Activated CD4-positive, alpha-beta memory T cell treated with anti-CD3 and anti-CD28 coated beads for 36 hours (primary cell): ENCODE measurements at regions of chr11 and their contacts with region 1.

Region 1: GRCh38 chr11:31369348-31370329 is at the starts of genes DCDC1 and DNAJC24:
- DNase-seq: peak; percentile 95
- H3K4me3 Mint-ChIP-seq: peak within 1 kb of the TSS; percentile 85
- H3K27ac Mint-ChIP-seq: peak within 1 kb of the TSS; percentile 83
- H3K4me1 Mint-ChIP-seq: peaks cover 55% of the 10 kb centered on the region
- H3K27me3 Mint-ChIP-seq: no peaks in the 10 kb centered on the region
- total RNA-seq, gene DCDC1: 0.21 to 0.27 TPM
- total RNA-seq, gene DNAJC24: 15.4 to 16.8 TPM

Region 2: DNA sequence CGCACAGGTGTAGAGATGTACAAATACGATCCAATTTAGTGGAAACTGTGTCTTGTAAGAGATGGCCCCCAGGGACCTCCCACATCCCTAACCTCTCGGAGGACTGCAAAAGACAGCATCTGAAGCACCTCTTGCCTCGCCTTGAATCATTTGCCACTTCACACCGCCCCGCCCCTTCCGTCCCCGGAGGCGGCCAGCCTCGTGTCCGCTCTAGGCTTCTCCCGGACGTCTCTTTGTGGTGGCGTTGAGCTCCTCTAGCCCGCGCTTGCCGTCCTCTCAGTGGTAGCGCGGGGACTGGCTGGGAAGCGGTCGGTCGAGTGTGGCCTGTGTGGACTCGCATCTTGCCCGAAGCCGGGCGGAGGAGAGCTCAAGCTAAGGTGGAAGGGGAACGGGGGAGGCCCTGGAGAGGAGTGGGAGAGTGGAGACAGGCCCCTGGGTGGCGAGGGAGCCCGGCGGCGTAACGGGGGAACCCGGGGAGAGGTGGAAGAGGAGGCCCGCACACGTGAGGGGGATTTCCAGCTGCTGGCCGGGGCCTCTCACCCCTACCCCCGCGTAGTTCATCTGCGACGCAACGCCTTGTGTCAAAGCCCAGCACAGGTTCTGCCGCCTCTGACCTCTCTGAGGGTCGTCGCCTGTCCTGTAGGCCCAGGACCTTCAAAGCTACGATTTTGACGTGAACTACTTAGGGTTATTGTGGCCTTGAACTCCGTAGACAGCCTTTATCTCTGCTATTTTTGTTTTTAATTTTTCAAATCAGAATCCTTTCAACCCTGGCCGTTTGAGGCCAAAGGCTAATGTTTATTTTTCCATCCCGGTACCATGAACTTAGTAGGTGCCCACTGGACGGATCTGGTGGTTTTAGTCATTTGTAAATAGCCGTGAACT is 1046.6 kb before region 1 on chr11 and contains the start of gene ARL14EP:
- CTCF ChIA-PET with region 1: no interaction called
- POLR2A ChIA-PET with region 1: no interaction called
- intact Hi-C with region 1: loop called (anchors 5 kb)
- DNase-seq: peak; percentile 93
- H3K4me3 Mint-ChIP-seq: peak within 1 kb of the TSS; percentile 99
- H3K27ac Mint-ChIP-seq: peak within 1 kb of the TSS; percentile 99
- H3K4me1 Mint-ChIP-seq: peaks cover 41% of the 10 kb centered on the region
- H3K27me3 Mint-ChIP-seq: peaks cover 5% of the 10 kb centered on the region
- total RNA-seq, gene ARL14EP: 25.0 to 31.0 TPM

Region 3: DNA sequence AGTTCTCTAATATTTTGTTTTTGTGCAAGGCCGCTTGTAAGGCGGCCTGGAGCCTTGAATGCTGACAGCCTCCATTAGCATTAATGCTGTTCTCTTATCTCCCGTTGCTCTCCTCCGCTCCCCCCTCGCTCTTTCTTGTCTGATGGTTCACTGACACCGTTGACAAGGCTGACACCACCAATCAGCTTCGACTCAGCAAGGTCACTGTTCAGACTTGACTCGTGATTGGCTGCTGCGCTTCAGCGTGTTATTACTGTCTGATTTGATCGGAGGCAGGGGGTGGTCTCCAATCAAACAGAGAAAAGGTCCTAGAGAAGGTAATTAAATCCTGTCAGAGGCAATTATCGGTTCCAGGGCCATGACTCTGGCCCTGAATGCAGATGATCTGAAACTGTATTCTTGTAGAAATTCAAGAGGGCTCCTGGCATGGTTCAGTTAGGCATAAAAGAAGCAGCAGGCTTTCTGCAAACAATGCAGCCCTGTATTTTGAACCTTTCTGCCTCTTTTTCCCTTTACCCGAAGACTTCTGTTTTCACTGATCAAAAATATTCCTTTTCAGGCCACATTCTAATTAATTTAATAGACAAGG is 734.1 kb before region 1 on chr11:
- CTCF ChIA-PET with region 1: no interaction called
- POLR2A ChIA-PET with region 1: no interaction called
- intact Hi-C with region 1: no loop called
- DNase-seq: no peak
- H3K4me3 Mint-ChIP-seq: no peak overlapping the region
- H3K27ac Mint-ChIP-seq: no peak overlapping the region
- H3K4me1 Mint-ChIP-seq: no peaks in the 10 kb centered on the region
- H3K27me3 Mint-ChIP-seq: no peaks in the 10 kb centered on the region

Region 4: GRCh38 chr11:31303644-31304180 is 65.9 kb before region 1 on chr11:
- CTCF ChIA-PET with region 1: no interaction called
- POLR2A ChIA-PET with region 1: no interaction called
- intact Hi-C with region 1: no loop called
- DNase-seq: no peak
- H3K4me3 Mint-ChIP-seq: no peak overlapping the region
- H3K27ac Mint-ChIP-seq: no peak overlapping the region
- H3K4me1 Mint-ChIP-seq: no peaks in the 10 kb centered on the region
- H3K27me3 Mint-ChIP-seq: peaks cover 3% of the 10 kb centered on the region

Region 5: GRCh38 chr11:31509429-31510345 is 140.0 kb after region 1 on chr11 and contains the starts of genes ELP4 and IMMP1L:
- CTCF ChIA-PET with region 1: no interaction called
- POLR2A ChIA-PET with region 1: no interaction called
- intact Hi-C with region 1: loop called (anchors 1 kb)
- DNase-seq: peak; percentile 97
- H3K4me3 Mint-ChIP-seq: peak within 1 kb of the TSS; percentile 97
- H3K27ac Mint-ChIP-seq: peak within 1 kb of the TSS; percentile 88
- H3K4me1 Mint-ChIP-seq: peaks cover 30% of the 10 kb centered on the region
- H3K27me3 Mint-ChIP-seq: no peaks in the 10 kb centered on the region
- total RNA-seq, gene ELP4: 18.3 to 18.5 TPM
- total RNA-seq, gene IMMP1L: 20.4 to 21.8 TPM

Region 6: DNA sequence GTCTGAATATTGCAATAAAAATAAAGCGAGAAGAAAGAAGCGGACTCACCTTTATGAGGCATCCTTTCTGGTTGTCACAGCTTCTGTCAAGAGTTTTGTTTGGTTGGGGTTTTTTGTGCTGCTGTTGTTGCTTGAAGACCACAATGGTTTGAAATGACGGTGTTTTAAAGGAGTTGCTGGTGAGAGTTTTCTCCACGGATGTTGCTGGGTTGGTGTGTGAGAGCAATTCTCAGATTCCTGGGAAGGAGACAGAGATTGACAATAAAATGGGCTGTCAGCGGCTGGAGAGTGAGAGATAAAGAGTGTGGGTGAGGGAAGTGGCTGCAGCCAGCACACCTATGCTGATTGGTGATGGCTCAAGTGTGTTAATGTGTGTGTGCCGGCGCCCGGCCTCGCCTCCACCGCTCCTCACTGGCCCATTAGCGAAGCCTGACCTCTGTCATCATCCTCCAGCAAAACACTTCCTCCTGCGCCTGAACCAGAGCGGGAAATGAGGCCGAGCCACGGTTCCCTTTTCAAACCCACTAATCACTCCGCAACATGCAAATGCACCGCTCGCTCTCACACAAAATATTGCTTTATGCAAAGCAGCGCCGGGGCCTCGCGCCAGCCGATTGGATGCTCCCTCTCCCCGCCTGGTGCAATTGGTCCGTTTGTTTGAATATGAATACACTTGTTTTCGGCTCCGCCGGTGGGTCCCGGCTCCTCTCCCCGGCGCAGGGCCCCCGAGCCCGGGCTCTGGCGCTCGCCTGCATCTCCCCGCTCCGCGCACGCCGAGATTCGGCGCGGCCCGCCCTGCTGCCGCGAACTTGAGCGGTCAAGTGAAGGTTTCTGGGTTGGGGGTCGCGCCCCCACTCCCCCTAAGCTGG is 441.4 kb after region 1 on chr11 and contains the start of gene PAX6:
- CTCF ChIA-PET with region 1: no interaction called
- POLR2A ChIA-PET with region 1: no interaction called
- intact Hi-C with region 1: loop called (anchors 5 kb)
- DNase-seq: peak; percentile 69
- H3K4me3 Mint-ChIP-seq: peak within 1 kb of the TSS; percentile 66
- H3K27ac Mint-ChIP-seq: no peak within 1 kb of the TSS
- H3K4me1 Mint-ChIP-seq: peaks cover 41% of the 10 kb centered on the region
- H3K27me3 Mint-ChIP-seq: peaks cover 74% of the 10 kb centered on the region
- total RNA-seq, gene PAX6: not detected